ENCODE measurements at regions of chr9 and their contacts with region 1.

Region 1: GRCh38 chr9:134641173-134641985 is at the start of gene COL5A1:
- DNase-seq: peak; percentile 91
- ATAC-seq: peak; percentile 86 to 92 (median 90)
- H3K4me3 ChIP-seq: peak within 1 kb of the TSS; percentile 61 to 92 (median 76)
- H3K27ac ChIP-seq: peak within 1 kb of the TSS; percentile 76 to 92 (median 86)
- H3K4me1 ChIP-seq: peaks cover 5 to 36% (median 28%) of the 10 kb centered on the region in 9 donors
- H3K27me3 ChIP-seq: peaks cover 0 to 30% (median 0%) of the 10 kb centered on the region in 7 donors
- CTCF ChIP-seq: peak in 5 of 9 donors; percentile 22 to 47 (median 42)
- total RNA-seq, gene COL5A1: 8.1 to 60.0 (median 12.2) TPM

Region 2: DNA sequence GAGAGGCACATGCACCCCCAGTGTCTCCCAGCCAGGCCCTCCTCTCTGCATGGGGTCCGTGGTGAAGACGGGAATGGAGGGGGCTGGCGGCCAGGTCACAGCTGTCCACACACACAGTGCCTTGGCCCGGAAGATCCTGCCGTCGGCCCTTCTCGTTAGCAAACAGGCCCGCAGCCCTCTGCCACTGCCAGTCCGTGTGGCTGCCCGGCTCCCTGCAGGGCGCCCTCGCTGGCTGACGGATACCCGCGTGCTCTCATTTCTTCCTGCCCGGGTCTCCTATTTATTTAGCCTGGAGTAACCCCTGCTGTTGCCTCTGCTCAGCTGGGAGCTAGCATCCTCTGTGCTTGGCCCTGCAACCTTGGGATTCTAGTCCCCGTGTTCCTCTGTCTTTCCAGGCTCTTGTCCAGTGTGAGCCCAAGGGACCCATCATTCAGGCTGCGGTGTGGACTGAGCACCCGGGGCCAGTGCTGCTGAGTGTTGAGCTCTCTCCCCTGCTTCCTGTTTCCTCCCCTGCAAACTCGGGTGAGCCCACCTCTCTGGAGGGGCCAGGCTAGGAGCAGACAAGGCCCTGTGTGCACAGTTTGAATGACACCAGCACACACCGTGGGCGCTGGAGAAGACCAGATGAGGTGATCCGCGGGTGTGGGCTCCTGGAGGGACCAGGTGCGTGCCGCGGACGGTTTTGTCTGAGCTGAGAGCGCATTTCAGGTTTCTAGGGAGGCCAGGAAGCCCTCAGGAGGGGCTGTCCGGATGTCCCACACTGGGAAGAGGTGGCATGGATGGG is 462.4 kb before region 1 on chr9:
- intact Hi-C with region 1: loop called in 2 of 10 experiments (anchors 10 kb)
- DNase-seq: peak in 1 of 2 donors; percentile 57
- ATAC-seq: peak; percentile 5 to 71 (median 46)
- H3K4me3 ChIP-seq: no peak overlapping the region
- H3K27ac ChIP-seq: peak overlapping the region in 1 of 10 donors; percentile 10
- H3K4me1 ChIP-seq: peaks cover 0 to 40% (median 27%) of the 10 kb centered on the region in 9 donors
- H3K27me3 ChIP-seq: peaks cover 0 to 38% (median 24%) of the 10 kb centered on the region in 7 donors
- CTCF ChIP-seq: no peak

Region 3: GRCh38 chr9:134217832-134218629 is 423.3 kb before region 1 on chr9:
- intact Hi-C with region 1: no loop called
- DNase-seq: peak in 1 of 2 donors; percentile 4
- ATAC-seq: no peak
- H3K4me3 ChIP-seq: no peak overlapping the region
- H3K27ac ChIP-seq: no peak overlapping the region
- H3K4me1 ChIP-seq: peaks cover 6 to 34% (median 24%) of the 10 kb centered on the region in 9 donors
- H3K27me3 ChIP-seq: no peaks in the 10 kb centered on the region
- CTCF ChIP-seq: peak in 7 of 9 donors; percentile 14 to 38 (median 26)

Region 4: DNA sequence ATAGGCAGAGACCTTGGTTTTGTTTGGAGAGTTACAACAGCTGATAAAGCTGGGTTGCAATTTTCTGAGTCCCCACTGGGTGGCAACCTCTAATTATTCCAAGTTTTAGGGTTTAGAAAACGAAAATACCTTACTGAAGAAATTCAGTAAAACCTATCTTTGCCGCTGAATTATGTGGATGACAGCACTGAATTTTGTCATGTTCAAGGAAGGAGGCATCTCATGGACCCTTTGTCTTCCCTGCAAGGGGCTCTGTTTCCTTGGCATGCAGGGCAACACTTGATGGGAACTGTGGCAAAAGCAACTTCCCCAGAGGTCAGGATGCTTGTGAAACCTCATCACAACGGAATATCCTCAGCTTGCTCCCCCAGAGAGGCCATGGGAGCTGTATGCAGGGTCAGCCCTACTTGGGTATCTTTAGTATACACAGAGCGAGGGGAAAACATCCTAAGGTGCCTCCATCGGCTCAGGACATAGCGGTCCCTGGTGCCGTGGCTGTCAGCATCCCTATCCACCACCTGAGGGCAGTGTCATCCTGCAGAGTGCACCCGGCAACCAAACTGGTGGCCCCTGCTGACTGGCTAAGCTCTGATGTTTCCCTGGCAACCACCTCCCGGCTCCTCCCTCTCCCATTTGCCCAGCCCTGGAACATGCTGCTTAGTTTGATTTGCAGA is 192.0 kb before region 1 on chr9:
- intact Hi-C with region 1: loop called in 4 of 10 experiments (anchors 5 to 10 kb)
- DNase-seq: peak; percentile 87 to 94
- ATAC-seq: peak; percentile 93 to 97 (median 96)
- H3K4me3 ChIP-seq: no peak overlapping the region
- H3K27ac ChIP-seq: no peak overlapping the region
- H3K4me1 ChIP-seq: peaks cover 0 to 6% (median 0%) of the 10 kb centered on the region in 9 donors
- H3K27me3 ChIP-seq: no peaks in the 10 kb centered on the region
- CTCF ChIP-seq: peak; percentile 86 to 96 (median 93)

Region 5: GRCh38 chr9:134455934-134456739 is 185.2 kb before region 1 on chr9:
- intact Hi-C with region 1: loop called in 6 of 10 experiments (anchors 5 to 10 kb)
- DNase-seq: peak; percentile 84 to 91
- ATAC-seq: peak; percentile 84 to 94 (median 90)
- H3K4me3 ChIP-seq: peak overlapping the region in 9 of 10 donors; percentile 21 to 51 (median 39)
- H3K27ac ChIP-seq: peak overlapping the region; percentile 81 to 97 (median 92)
- H3K4me1 ChIP-seq: peaks cover 14 to 46% (median 33%) of the 10 kb centered on the region in 9 donors
- H3K27me3 ChIP-seq: no peaks in the 10 kb centered on the region
- CTCF ChIP-seq: peak in 1 of 9 donors; percentile 15

Region 6: GRCh38 chr9:134474055-134474370 is 167.4 kb before region 1 on chr9:
- intact Hi-C with region 1: loop called in 1 of 10 experiments (anchors 5 kb)
- DNase-seq: peak in 1 of 2 donors; percentile 68
- ATAC-seq: peak; percentile 50 to 78 (median 68)
- H3K4me3 ChIP-seq: no peak overlapping the region
- H3K27ac ChIP-seq: peak overlapping the region in 9 of 10 donors; percentile 58 to 79 (median 69)
- H3K4me1 ChIP-seq: peaks cover 14 to 49% (median 28%) of the 10 kb centered on the region in 9 donors
- H3K27me3 ChIP-seq: no peaks in the 10 kb centered on the region
- CTCF ChIP-seq: no peak

Region 7: DNA sequence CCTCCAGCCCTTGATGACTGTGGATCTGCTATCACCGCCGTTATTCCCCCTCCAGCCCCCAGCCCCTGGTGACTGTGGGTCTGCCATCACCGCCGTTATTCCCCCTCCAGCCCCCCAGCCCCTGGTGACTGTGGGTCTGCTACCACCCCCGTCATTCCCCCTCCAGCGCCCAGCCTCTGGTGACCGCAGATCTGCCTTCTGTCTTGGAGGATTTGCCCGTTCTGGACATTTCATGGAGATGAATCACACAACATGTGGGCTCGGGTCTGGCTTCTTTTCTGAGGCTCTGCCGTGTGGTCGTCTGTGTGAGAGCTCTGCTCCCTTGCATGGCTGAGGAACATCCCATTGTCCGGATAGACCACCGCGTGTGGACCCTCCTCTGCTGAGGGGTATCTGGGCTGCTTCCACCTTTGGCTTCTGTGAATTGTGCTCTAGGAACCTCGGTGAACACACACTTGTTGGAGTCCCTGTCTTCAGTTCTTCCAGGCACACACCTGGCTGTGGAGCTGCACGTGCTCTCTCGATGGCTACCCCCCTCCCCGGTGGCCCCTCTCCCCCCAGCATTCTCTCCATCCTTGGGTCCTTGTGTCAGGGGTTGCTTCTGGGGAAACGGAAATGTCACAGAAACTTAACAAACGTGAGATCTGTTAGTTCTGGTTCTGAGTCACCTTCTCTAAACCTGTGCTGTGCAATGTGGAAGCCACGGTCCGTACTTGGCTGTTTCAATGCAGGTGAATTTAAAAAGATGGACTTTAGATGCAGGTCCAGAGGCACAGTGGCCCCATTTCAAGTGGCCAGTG is 105.1 kb before region 1 on chr9:
- intact Hi-C with region 1: loop called in 1 of 10 experiments (anchors 10 kb)
- DNase-seq: no peak
- ATAC-seq: no peak
- H3K4me3 ChIP-seq: no peak overlapping the region
- H3K27ac ChIP-seq: no peak overlapping the region
- H3K4me1 ChIP-seq: peaks cover 0 to 32% (median 0%) of the 10 kb centered on the region in 9 donors
- H3K27me3 ChIP-seq: peaks cover 0 to 52% (median 13%) of the 10 kb centered on the region in 7 donors
- CTCF ChIP-seq: no peak

Region 8: GRCh38 chr9:134689321-134690181 is 48.2 kb after region 1 on chr9:
- intact Hi-C with region 1: loop called in 1 of 10 experiments (anchors 5 kb)
- DNase-seq: peak; percentile 70 to 76
- ATAC-seq: peak; percentile 71 to 89 (median 82)
- H3K4me3 ChIP-seq: no peak overlapping the region
- H3K27ac ChIP-seq: peak overlapping the region in 5 of 10 donors; percentile 19 to 52 (median 29)
- H3K4me1 ChIP-seq: peaks cover 0 to 38% (median 15%) of the 10 kb centered on the region in 9 donors
- H3K27me3 ChIP-seq: no peaks in the 10 kb centered on the region
- CTCF ChIP-seq: peak; percentile 66 to 87 (median 81)

Measured in heart right ventricle (tissue), 16 donors.